Activated naive CD4-positive, alpha-beta T cell treated with anti-CD3 and anti-CD28 coated beads for 36 hours (primary cell): ENCODE measurements at regions of chr6 and their contacts with region 1.

Region 1: DNA sequence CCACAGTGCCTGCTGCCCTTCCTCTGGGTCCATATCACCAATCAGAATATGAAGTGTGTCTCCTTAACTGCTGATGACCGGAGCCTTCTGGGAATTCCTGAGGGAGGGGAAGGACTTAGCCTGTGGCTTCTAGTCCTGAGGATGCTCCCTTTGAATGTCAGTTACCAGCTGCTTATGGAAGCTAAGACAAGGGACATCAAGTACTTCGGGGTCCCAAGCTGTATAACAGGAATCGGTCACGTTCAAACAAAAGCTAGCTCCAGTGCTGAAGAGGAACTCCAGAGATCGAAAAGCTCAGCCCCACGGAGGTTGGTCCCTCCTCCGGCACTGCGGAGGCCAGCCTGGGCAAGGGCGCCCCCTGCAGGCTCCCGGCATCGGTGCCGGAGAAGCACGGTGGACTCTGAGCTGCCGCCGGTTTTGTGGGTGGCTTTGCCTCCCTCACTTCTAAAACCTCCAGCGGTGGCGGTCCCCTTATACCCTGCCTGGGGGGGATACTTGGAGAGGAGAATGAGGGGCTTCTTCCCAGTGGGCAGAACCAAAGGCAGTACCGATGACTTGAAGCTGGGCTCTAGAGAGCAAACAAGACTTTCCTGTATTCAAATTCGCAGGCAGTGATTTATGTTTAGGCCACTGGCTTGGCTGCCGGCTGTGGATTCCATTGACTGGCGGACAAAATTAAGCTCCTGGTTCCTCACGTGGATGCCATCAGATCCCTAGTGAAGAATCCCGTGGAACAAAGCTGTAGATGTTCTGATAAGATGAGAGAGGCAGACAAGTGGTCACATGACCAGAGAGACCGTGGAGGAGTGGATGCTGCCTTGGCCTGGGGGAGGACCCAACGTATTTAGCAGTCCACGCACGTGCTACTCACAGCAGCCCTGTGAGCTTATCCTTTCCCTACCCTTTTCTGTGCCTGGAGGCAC is 16.2 kb upstream of the UBR2 start:
- DNase-seq: peak; percentile 92
- H3K4me3 Mint-ChIP-seq: peak overlapping the region; percentile 70
- H3K27ac Mint-ChIP-seq: no peak overlapping the region
- H3K4me1 Mint-ChIP-seq: peaks cover 14% of the 10 kb centered on the region
- H3K27me3 Mint-ChIP-seq: peaks cover 2% of the 10 kb centered on the region

Region 2: DNA sequence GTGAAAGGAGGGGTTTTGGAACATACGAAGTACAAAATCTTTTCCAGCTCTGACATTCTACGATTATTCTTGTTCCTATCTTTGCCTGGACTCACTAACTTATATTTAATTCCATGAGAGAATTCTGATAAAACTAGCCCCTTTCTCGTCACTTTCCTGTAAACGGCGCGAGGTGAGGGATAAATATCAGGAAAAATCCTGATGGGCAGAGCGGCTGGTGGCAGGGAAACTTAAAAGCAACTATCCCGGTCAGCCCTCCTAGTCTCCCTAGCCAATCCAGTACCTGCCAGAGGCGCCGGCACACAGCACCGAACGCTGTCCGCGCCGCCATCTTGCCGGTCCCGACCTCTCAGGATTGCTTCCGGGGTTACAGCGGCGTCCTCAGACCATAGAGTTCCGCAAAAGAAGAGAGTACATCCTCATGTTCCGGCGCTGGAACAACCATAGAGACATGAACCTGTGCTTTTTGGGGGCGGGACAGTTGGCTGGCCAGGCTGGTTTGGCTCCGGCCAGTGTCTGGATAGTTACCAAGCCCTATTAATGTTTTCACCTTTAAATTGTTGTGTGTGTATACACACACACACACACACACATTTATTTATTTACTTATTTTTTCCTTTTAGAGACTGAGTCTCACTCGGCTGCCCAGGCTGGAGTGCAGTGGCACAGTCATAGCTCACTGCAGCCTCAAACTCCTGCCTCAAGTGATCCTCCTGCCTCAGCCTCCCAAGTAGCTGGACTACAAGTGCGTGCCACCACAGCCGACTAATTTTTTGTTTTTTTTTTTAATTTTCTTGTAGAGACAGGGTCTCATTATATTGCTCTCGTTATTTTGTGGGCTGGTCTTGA is 329.9 kb before region 1 on chr6 and contains the start of gene MRPS10:
- CTCF ChIA-PET with region 1: interaction called, 49 read pairs
- intact Hi-C with region 1: loop called (anchors 2 kb)
- DNase-seq: peak; percentile 96
- H3K4me3 Mint-ChIP-seq: peak within 1 kb of the TSS; percentile 94
- H3K27ac Mint-ChIP-seq: peak within 1 kb of the TSS; percentile 88
- H3K4me1 Mint-ChIP-seq: peaks cover 37% of the 10 kb centered on the region
- H3K27me3 Mint-ChIP-seq: no peaks in the 10 kb centered on the region
- total RNA-seq, gene MRPS10: 39.7 to 40.7 TPM

Region 3: DNA sequence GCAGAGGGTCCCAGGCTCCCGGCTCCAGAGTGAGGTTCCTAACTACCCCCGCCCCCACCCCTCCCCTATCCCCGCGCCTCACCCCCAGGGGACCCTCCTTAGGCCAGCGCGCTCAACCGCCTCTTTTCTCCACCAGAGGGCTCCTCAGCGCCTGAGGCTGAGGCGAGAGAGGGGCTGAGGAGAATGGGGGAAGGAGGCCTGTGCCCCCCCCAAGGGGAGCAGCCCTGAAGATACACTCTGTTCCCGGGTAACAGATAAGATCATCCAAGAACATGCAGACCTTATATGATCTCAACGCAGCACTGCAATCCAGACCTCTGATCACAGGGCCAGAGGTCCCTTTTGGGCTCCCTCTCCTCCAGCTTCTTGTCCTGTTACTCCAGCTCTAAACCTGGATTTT is 286.7 kb before region 1 on chr6:
- CTCF ChIA-PET with region 1: interaction called, 99 read pairs
- intact Hi-C with region 1: loop called (anchors 1 kb)
- DNase-seq: peak; percentile 53
- H3K4me3 Mint-ChIP-seq: no peak overlapping the region
- H3K27ac Mint-ChIP-seq: no peak overlapping the region
- H3K4me1 Mint-ChIP-seq: no peaks in the 10 kb centered on the region
- H3K27me3 Mint-ChIP-seq: no peaks in the 10 kb centered on the region

Region 4: DNA sequence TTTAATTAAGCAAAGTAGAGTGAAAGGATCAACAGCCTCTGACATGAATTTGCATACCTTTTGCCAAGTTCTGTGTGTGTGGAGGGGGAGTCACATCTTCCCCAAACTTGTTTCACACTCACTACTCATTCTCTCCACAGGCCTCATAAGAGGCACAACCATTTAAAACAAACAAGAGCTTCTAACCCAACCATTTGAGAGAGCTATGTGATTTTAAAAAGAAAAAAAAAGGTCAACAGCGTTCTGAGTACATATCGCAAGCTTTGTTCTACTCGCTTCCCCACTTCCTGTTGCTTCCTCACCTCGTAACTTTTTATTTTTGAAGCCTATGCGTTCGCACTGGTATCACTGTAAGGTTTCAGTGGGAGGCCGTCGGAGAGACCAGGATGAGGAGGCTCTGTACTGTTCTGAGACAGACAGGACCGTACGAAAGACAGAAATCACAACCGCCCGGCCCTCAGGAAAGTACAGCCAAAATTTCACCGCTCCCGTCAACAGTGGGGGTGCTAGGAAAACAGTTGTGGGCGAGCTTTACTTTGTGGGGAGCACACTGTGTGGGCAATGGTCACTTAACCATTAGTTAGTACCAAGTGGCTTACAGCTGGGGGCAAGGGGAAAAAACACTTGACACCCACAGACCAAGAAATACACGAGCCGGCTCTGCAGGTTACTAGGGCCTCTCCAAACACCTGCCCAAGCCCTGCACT is 157.3 kb before region 1 on chr6:
- CTCF ChIA-PET with region 1: interaction called, 11 read pairs
- intact Hi-C with region 1: no loop called
- DNase-seq: peak; percentile 89
- H3K4me3 Mint-ChIP-seq: peak overlapping the region; percentile 69
- H3K27ac Mint-ChIP-seq: peak overlapping the region; percentile 99
- H3K4me1 Mint-ChIP-seq: peaks cover 90% of the 10 kb centered on the region
- H3K27me3 Mint-ChIP-seq: no peaks in the 10 kb centered on the region

Region 5: DNA sequence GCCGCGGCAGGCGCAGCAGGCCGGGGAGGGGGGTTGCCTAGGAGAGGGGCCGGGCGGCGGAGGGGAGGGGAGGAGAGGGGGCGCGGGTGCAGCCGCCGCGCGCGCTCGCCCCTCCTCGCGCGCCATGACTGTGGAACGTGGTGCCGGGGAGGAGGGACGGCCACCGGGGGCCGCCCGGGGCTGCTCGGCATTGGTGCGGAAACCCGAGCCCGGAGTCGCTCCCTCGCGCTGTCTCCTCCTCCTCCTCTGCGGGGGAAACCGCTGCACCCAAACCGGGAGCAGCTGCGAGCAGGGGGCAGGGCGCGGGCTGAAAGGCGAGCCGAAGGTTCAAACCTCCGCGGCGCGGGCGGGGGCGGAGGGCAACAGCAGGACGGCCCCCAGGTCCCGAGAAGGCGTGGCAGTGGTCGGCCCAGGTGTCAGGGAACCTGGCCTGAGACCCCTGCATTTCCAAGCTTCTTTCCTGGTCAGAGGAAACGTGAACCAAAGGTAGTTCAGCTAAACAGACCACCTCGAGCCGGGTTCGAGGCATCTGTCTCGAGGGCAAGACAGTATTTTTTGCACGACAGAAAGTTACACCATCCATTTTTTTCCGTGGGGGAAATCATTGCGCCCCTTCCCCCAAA is 94.5 kb before region 1 on chr6:
- CTCF ChIA-PET with region 1: interaction called, 14 read pairs
- intact Hi-C with region 1: loop called (anchors 5 kb)
- DNase-seq: peak; percentile 87
- H3K4me3 Mint-ChIP-seq: peak overlapping the region; percentile 88
- H3K27ac Mint-ChIP-seq: peak overlapping the region; percentile 81
- H3K4me1 Mint-ChIP-seq: peaks cover 32% of the 10 kb centered on the region
- H3K27me3 Mint-ChIP-seq: peaks cover 7% of the 10 kb centered on the region

Region 6: GRCh38 chr6:42532038-42532669 is 15.5 kb before region 1 on chr6:
- CTCF ChIA-PET with region 1: interaction called, 29 read pairs
- intact Hi-C with region 1: no loop called
- DNase-seq: peak; percentile 33
- H3K4me3 Mint-ChIP-seq: no peak overlapping the region
- H3K27ac Mint-ChIP-seq: no peak overlapping the region
- H3K4me1 Mint-ChIP-seq: no peaks in the 10 kb centered on the region
- H3K27me3 Mint-ChIP-seq: no peaks in the 10 kb centered on the region

Region 7: DNA sequence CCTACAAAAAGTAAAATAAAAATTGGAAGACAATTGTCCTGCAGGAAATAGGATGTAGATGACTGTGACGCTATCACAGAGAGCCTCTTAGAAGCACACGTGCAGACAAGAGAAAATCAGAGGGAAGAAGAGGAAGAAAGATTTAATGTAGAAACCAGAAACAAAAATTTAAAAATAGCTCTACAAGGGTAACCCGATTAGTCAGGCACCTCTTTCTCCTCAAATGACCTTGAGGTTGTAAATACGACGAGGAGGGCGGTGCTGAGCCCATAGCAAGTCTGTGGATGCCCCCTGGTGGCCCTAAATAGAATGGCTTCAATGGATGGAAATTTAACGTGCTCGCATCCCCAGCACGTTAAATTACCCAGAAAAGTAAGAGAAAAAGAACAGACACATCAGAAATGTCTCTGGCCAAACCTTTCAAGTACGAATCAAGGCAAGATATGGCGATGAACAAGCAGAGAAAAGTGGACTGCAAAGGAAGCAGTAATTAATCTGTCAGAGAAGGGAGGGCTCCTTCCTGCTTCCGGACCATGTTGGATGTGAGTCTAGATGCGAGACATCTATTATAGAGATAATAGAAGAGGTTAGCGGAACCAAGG is 178.9 kb after region 1 on chr6:
- CTCF ChIA-PET with region 1: interaction called, 10 read pairs
- intact Hi-C with region 1: no loop called
- DNase-seq: peak; percentile 84
- H3K4me3 Mint-ChIP-seq: peak overlapping the region; percentile 76
- H3K27ac Mint-ChIP-seq: peak overlapping the region; percentile 91
- H3K4me1 Mint-ChIP-seq: peaks cover 15% of the 10 kb centered on the region
- H3K27me3 Mint-ChIP-seq: no peaks in the 10 kb centered on the region

Region 8: DNA sequence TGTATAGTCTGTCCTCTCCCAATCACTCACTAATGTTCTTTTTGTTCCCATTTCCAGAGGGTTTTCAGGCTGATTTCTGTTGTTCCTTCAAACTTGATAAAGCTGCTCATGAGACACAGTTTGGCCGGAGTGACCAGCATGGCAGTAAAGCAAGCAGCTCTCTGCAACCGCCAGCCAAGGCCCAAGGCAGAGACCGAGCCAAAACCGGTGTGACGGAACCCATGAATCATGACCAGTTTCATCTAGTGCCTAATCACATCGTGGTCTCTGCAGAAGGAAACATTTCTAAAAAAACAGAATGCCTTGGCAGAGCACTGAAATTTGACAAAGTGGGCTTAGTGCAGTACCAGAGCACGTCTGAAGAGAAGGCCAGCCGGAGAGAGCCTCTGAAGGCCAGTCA is 316.9 kb after region 1 on chr6:
- CTCF ChIA-PET with region 1: no interaction called
- intact Hi-C with region 1: no loop called
- DNase-seq: no peak
- H3K4me3 Mint-ChIP-seq: no peak overlapping the region
- H3K27ac Mint-ChIP-seq: peak overlapping the region; percentile 13
- H3K4me1 Mint-ChIP-seq: no peaks in the 10 kb centered on the region
- H3K27me3 Mint-ChIP-seq: no peaks in the 10 kb centered on the region